ENCODE measurements at regions of chr19 and their contacts with region 1.

Region 1: GRCh38 chr19:49701271-49701786 is 10.4 kb downstream of the CPT1C start:
- DNase-seq: no peak
- H3K4me3 ChIP-seq: no peak overlapping the region
- CTCF ChIP-seq: no peak

Region 2: GRCh38 chr19:49718511-49718910 is 17.2 kb after region 1 on chr19:
- CTCF ChIA-PET with region 1: interaction called, 25 read pairs
- POLR2A ChIA-PET with region 1: no interaction called
- DNase-seq: no peak
- H3K4me3 ChIP-seq: no peak overlapping the region
- CTCF ChIP-seq: no peak